ENCODE measurements at regions of chr12 and their contacts with region 1.

Region 1: GRCh38 chr12:91382081-91382543 is 199.5 kb upstream of the DCN start:
- DNase-seq: peak; percentile 54
- ATAC-seq: peak; percentile 95
- H3K4me3 ChIP-seq: peak overlapping the region; percentile 68
- H3K27ac ChIP-seq: peak overlapping the region; percentile 37; the same call in 1 of the 2 replicates
- H3K4me1 ChIP-seq: peaks cover 3% of the 10 kb centered on the region; the same call in 1 of the 2 replicates
- H3K27me3 ChIP-seq: no peaks in the 10 kb centered on the region
- CTCF ChIP-seq: peak; percentile 80 to 89 (median 87)
- EP300 ChIP-seq: no peak
- POLR2A ChIP-seq: no peak
- RAD21 ChIP-seq: peak; percentile 92

Region 2: DNA sequence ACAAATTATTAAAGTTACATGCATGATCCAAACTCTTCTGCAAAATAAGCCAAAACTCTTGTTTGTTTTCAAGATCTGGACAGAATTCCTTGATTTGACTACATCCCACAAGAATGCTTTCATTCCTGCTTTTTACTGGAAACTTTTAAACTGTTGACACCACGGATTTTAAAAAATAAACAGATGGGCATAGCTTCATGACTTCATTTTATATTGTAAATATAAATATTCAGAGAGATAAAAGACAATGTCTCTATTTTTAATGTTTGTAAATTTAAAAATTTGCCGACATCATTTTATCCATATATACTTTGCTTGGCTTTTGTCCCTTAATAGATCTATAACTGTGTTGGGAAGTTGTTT is 65.2 kb before region 1 on chr12:
- CTCF ChIA-PET with region 1: no interaction called
- POLR2A ChIA-PET with region 1: no interaction called
- RAD21 ChIA-PET with region 1: no interaction called
- SMC1A ChIA-PET with region 1: no interaction called
- in situ Hi-C with region 1: no loop called
- intact Hi-C with region 1: no loop called
- DNase-seq: no peak
- ATAC-seq: no peak
- H3K4me3 ChIP-seq: no peak overlapping the region
- H3K27ac ChIP-seq: no peak overlapping the region
- H3K4me1 ChIP-seq: no peaks in the 10 kb centered on the region
- H3K27me3 ChIP-seq: no peaks in the 10 kb centered on the region
- CTCF ChIP-seq: no peak
- EP300 ChIP-seq: no peak
- POLR2A ChIP-seq: no peak
- RAD21 ChIP-seq: no peak

Region 3: GRCh38 chr12:91361864-91362263 is 20.2 kb before region 1 on chr12:
- CTCF ChIA-PET with region 1: interaction called, 14 read pairs
- POLR2A ChIA-PET with region 1: no interaction called
- RAD21 ChIA-PET with region 1: interaction called, 4 read pairs
- SMC1A ChIA-PET with region 1: interaction called, 3 read pairs
- in situ Hi-C with region 1: no loop called
- intact Hi-C with region 1: no loop called
- DNase-seq: no peak
- ATAC-seq: peak; percentile 72; the same call in 2 of the 3 replicates
- H3K4me3 ChIP-seq: no peak overlapping the region
- H3K27ac ChIP-seq: no peak overlapping the region
- H3K4me1 ChIP-seq: no peaks in the 10 kb centered on the region
- H3K27me3 ChIP-seq: no peaks in the 10 kb centered on the region
- CTCF ChIP-seq: peak; percentile 32 to 55 (median 47); a peak in 5 of 6 replicates
- EP300 ChIP-seq: no peak
- POLR2A ChIP-seq: no peak
- RAD21 ChIP-seq: peak; percentile 56

Region 4: DNA sequence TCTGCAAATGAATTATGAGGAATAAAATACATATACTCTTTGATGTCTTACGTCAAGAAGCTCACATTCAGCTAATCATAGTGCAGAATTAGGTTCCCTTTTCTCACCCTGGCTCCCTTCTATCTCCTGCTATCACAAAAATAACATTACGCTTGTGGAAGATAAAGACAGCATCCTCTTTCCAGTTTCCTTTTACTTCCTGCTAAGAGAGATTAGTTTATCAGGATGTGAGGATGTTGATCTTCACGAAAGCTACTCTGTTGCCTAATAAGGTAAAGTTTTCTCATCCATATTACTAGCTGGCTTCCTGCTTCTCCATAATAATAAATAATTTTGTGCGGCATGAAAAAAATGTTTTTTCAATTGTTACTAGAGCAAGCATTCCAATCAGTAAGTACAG is 18.2 kb after region 1 on chr12:
- CTCF ChIA-PET with region 1: interaction called, 15 read pairs
- POLR2A ChIA-PET with region 1: no interaction called
- RAD21 ChIA-PET with region 1: no interaction called
- SMC1A ChIA-PET with region 1: interaction called, 10 read pairs
- in situ Hi-C with region 1: no loop called
- intact Hi-C with region 1: no loop called
- DNase-seq: no peak
- ATAC-seq: no peak
- H3K4me3 ChIP-seq: no peak overlapping the region
- H3K27ac ChIP-seq: no peak overlapping the region
- H3K4me1 ChIP-seq: no peaks in the 10 kb centered on the region
- H3K27me3 ChIP-seq: no peaks in the 10 kb centered on the region
- CTCF ChIP-seq: no peak
- EP300 ChIP-seq: no peak
- POLR2A ChIP-seq: no peak
- RAD21 ChIP-seq: no peak

Region 5: DNA sequence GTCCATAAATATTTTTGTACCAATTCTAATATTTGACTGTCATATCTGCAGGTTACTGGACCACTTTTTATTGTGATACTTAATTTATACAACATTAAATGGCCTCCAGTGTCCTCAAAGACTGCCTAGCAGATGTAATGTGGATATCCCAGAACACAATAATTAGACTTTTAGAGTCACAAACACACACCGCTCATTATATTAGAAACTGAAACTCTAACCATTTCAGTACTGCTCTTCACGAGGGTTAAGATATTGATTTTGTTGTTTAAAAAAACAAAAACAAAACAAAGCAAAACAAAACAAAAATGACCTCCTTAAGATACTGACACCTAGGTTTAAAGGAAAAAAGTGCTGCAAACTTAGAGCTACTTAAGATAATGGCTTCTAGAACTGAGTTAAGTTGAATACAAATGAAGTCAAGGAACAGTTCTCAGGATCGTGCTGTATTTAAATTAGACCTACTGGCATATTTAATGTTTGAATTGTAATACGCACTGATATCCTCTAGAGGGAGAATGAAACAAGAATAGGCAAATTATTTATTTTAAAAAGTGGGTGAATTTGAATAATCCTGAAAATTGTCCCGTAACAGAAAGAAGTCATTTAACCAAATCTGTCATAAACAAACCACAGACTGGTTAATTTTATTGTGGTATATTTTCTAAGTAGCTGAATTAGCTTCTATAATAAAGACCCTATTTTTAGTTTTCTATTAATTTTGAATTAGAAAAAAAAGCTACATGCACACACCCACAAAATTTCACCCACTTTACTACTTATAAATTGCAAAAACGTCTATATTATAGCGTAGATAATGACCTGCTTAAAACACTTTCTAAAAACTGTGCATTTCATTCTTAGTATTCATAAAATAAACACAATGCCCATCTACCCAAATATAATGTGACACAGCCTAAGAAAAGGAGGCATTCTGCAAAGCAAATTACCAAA is 195.8 kb after region 1 on chr12:
- CTCF ChIA-PET with region 1: interaction called, 18 read pairs
- POLR2A ChIA-PET with region 1: no interaction called
- RAD21 ChIA-PET with region 1: interaction called, 4 read pairs
- SMC1A ChIA-PET with region 1: interaction called, 7 read pairs
- in situ Hi-C with region 1: no loop called
- intact Hi-C with region 1: loop called (anchors 5 kb)
- DNase-seq: no peak
- ATAC-seq: peak; percentile 73
- H3K4me3 ChIP-seq: no peak overlapping the region; the same call in 1 of the 2 replicates
- H3K27ac ChIP-seq: no peak overlapping the region
- H3K4me1 ChIP-seq: no peaks in the 10 kb centered on the region
- H3K27me3 ChIP-seq: no peaks in the 10 kb centered on the region
- CTCF ChIP-seq: peak; percentile 36 to 51 (median 41); a peak in 3 of 6 replicates
- EP300 ChIP-seq: no peak
- POLR2A ChIP-seq: no peak
- RAD21 ChIP-seq: peak; percentile 47; the same call in 1 of the 2 replicates

Region 6: DNA sequence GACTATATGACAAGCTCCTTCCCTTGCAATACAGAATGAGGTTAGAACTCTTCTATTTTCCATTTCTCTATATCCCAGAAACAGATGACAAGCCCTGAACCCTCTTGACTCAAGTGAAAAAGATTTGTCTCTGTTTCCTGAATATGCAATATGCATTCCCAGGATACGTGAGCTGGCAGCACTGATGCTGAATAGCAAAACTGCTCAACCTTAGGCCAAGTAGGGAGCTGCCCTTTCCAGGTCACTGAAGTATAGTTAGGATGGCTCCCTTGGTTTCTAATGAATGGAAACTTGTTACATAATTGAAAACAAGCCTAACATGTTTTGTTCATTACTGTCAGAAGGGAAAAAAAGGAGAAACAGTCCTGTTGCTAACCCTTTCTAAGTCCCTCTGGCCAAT is 1272.8 kb after region 1 on chr12:
- CTCF ChIA-PET with region 1: interaction called, 43 read pairs
- POLR2A ChIA-PET with region 1: no interaction called
- RAD21 ChIA-PET with region 1: interaction called, 31 read pairs
- SMC1A ChIA-PET with region 1: interaction called, 38 read pairs
- in situ Hi-C with region 1: no loop called
- intact Hi-C with region 1: loop called (anchors 1 kb)
- DNase-seq: no peak
- ATAC-seq: no peak
- H3K4me3 ChIP-seq: no peak overlapping the region
- H3K27ac ChIP-seq: no peak overlapping the region
- H3K4me1 ChIP-seq: no peaks in the 10 kb centered on the region
- H3K27me3 ChIP-seq: no peaks in the 10 kb centered on the region
- CTCF ChIP-seq: no peak
- EP300 ChIP-seq: no peak
- POLR2A ChIP-seq: no peak
- RAD21 ChIP-seq: no peak

Measured in GM12878 (cell line).